HepG2 (cell line): ENCODE measurements at regions of chr14 and their contacts with region 1.

Region 1: GRCh38 chr14:104932676-104933631 is 8.3 kb downstream of the PLD4 start:
- DNase-seq: peak; percentile 36
- ATAC-seq: peak; percentile 69
- H3K4me3 ChIP-seq: peak overlapping the region in 2 of 3 experiments; percentile 38 to 58; a peak in 3 of 6 replicates
- H3K27ac ChIP-seq: no peak overlapping the region
- H3K4me1 ChIP-seq: no peaks in the 10 kb centered on the region; the same call in 1 of the 2 replicates
- H3K27me3 ChIP-seq: peaks cover 25 to 90% of the 10 kb centered on the region in 2 experiments
- CTCF ChIP-seq: peak; percentile 73
- EP300 ChIP-seq: no peak
- POLR2A ChIP-seq: no peak
- RAD21 ChIP-seq: peak; percentile 43; the same call in 1 of the 2 replicates

Region 2: DNA sequence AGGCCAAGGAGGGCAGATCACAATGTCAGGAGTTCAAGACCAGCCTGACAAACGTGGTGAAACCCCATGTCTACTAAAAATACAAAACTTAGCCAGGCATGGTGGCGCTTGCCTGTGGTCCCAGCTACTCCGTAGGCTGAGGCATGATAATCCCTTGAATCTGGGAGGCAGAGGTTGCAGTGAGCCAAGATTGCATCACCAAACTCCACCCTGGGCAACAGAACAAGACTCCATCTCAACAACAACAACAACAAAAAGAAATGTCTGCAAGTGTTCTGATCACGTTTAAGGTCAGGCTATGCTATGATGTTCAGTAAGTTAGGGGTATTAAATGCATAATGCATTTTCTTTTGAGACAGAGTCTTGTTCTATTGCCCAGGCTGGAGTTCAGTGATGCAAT is 15.0 kb before region 1 on chr14:
- CTCF ChIA-PET with region 1: no interaction called
- POLR2A ChIA-PET with region 1: no interaction called
- in situ Hi-C with region 1: no loop called
- intact Hi-C with region 1: loop called (anchors 2 kb)
- DNase-seq: no peak
- ATAC-seq: no peak
- H3K4me3 ChIP-seq: no peak overlapping the region
- H3K27ac ChIP-seq: no peak overlapping the region
- H3K4me1 ChIP-seq: peaks cover 6% of the 10 kb centered on the region; the same call in 1 of the 2 replicates
- H3K27me3 ChIP-seq: peaks cover 0 to 22% of the 10 kb centered on the region in 2 experiments; a peak in 2 of 5 replicates
- CTCF ChIP-seq: no peak
- EP300 ChIP-seq: no peak
- POLR2A ChIP-seq: no peak
- RAD21 ChIP-seq: no peak